Natural killer cell (primary cell): ENCODE measurements at regions of chr12 and their contacts with region 1.

Region 1: GRCh38 chr12:120252071-120252906 is 13.2 kb downstream of the PXN start:
- DNase-seq: peak; percentile 74 to 94
- ATAC-seq: peak; percentile 65 to 88 (median 84)
- H3K4me3 ChIP-seq: peak overlapping the region; percentile 16
- H3K4me3 Mint-ChIP-seq: peak overlapping the region; percentile 89
- H3K27ac ChIP-seq: peak overlapping the region; percentile 93
- H3K27ac Mint-ChIP-seq: peak overlapping the region; percentile 89 to 94
- H3K4me1 ChIP-seq: peaks cover 98% of the 10 kb centered on the region
- H3K4me1 Mint-ChIP-seq: peaks cover 86 to 88% of the 10 kb centered on the region in 2 donors
- H3K27me3 ChIP-seq: no peaks in the 10 kb centered on the region
- H3K27me3 Mint-ChIP-seq: no peaks in the 10 kb centered on the region
- CTCF ChIP-seq: no peak

Region 2: GRCh38 chr12:119659289-119659897 is 592.9 kb before region 1 on chr12:
- intact Hi-C with region 1: no loop called
- DNase-seq: peak; percentile 25 to 74
- ATAC-seq: peak; percentile 64 to 85 (median 82)
- H3K4me3 ChIP-seq: no peak overlapping the region
- H3K4me3 Mint-ChIP-seq: no peak overlapping the region
- H3K27ac ChIP-seq: no peak overlapping the region
- H3K27ac Mint-ChIP-seq: peak overlapping the region; percentile 68 to 75
- H3K4me1 ChIP-seq: no peaks in the 10 kb centered on the region
- H3K4me1 Mint-ChIP-seq: peaks cover 8 to 10% of the 10 kb centered on the region in 2 donors
- H3K27me3 ChIP-seq: no peaks in the 10 kb centered on the region
- H3K27me3 Mint-ChIP-seq: peaks cover 0 to 4% of the 10 kb centered on the region in 2 donors
- CTCF ChIP-seq: peak; percentile 98

Region 3: DNA sequence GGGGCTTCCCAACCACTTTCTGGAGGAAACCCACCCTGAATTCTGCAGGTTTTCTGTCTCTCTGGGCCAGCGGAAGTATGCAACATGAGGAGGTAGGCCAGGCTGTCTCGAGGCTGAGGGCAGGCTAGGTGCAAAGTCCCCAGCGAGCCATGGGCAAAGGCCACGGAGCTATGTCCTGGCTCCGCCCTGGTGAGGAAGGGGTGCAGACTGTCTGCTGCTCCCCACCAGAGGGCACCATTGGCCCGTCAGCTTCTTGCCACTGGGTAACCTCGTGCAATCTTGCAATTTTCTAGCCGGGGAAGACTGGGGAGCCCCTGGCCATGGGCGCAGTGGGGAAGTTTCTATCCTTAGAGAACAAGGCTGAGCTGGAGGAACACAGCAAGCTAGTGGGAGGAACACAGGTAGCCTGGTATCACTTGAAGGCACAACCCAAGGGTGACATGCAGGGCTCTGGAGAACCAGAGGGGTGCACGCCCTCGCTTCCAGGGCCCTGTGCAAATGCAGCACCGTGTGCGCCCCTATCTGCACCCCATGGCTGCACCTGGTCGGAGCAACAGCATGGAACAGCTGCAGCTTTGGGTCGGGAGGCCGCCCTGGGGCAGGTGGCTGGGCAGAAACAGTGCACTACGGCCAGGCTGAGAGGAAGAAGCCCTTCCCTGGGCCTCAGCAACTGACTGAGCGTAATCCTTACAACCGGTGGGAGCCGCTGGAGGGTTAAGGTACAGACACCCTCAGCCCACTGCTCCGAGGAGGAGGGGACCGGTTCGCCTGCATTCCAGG is 23.8 kb before region 1 on chr12:
- intact Hi-C with region 1: loop called (anchors 2 kb)
- DNase-seq: peak; percentile 85 to 94
- ATAC-seq: peak; percentile 69 to 90 (median 82)
- H3K4me3 ChIP-seq: peak overlapping the region; percentile 2
- H3K4me3 Mint-ChIP-seq: peak overlapping the region; percentile 89
- H3K27ac ChIP-seq: peak overlapping the region; percentile 19
- H3K27ac Mint-ChIP-seq: peak overlapping the region; percentile 76 to 84
- H3K4me1 ChIP-seq: peaks cover 98% of the 10 kb centered on the region
- H3K4me1 Mint-ChIP-seq: peaks cover 86 to 95% of the 10 kb centered on the region in 2 donors
- H3K27me3 ChIP-seq: no peaks in the 10 kb centered on the region
- H3K27me3 Mint-ChIP-seq: no peaks in the 10 kb centered on the region
- CTCF ChIP-seq: peak; percentile 94

Region 4: GRCh38 chr12:120265473-120266179 is 13.3 kb after region 1 on chr12 and contains the start of gene PXN:
- intact Hi-C with region 1: loop called (anchors 1 kb)
- DNase-seq: peak; percentile 95
- ATAC-seq: peak; percentile 88 to 99 (median 93)
- H3K4me3 ChIP-seq: peak within 1 kb of the TSS; percentile 80
- H3K4me3 Mint-ChIP-seq: peak within 1 kb of the TSS; percentile 94
- H3K27ac ChIP-seq: peak within 1 kb of the TSS; percentile 75
- H3K27ac Mint-ChIP-seq: peak within 1 kb of the TSS; percentile 93 to 94
- H3K4me1 ChIP-seq: peaks cover 49% of the 10 kb centered on the region
- H3K4me1 Mint-ChIP-seq: peaks cover 48 to 49% of the 10 kb centered on the region in 2 donors
- H3K27me3 ChIP-seq: no peaks in the 10 kb centered on the region
- H3K27me3 Mint-ChIP-seq: no peaks in the 10 kb centered on the region
- CTCF ChIP-seq: peak; percentile 65
- total RNA-seq, gene PXN: 436 to 504 (median 478) TPM

Region 5: GRCh38 chr12:120292661-120293531 is 40.6 kb after region 1 on chr12 and contains the start of gene RNU4-1:
- intact Hi-C with region 1: loop called (anchors 1 kb)
- DNase-seq: peak; percentile 68 to 87
- ATAC-seq: peak; percentile 38 to 57 (median 55)
- H3K4me3 ChIP-seq: peak within 1 kb of the TSS; percentile 61
- H3K4me3 Mint-ChIP-seq: no peak within 1 kb of the TSS
- H3K27ac ChIP-seq: peak within 1 kb of the TSS; percentile 95
- H3K27ac Mint-ChIP-seq: no peak within 1 kb of the TSS
- H3K4me1 ChIP-seq: peaks cover 13% of the 10 kb centered on the region
- H3K4me1 Mint-ChIP-seq: no peaks in the 10 kb centered on the region
- H3K27me3 ChIP-seq: no peaks in the 10 kb centered on the region
- H3K27me3 Mint-ChIP-seq: no peaks in the 10 kb centered on the region
- CTCF ChIP-seq: no peak
- total RNA-seq, gene RNU4-1: 768 to 1,610 (median 1,101) TPM